ENCODE measurements at regions of chr7 and their contacts with region 1.

Region 1: DNA sequence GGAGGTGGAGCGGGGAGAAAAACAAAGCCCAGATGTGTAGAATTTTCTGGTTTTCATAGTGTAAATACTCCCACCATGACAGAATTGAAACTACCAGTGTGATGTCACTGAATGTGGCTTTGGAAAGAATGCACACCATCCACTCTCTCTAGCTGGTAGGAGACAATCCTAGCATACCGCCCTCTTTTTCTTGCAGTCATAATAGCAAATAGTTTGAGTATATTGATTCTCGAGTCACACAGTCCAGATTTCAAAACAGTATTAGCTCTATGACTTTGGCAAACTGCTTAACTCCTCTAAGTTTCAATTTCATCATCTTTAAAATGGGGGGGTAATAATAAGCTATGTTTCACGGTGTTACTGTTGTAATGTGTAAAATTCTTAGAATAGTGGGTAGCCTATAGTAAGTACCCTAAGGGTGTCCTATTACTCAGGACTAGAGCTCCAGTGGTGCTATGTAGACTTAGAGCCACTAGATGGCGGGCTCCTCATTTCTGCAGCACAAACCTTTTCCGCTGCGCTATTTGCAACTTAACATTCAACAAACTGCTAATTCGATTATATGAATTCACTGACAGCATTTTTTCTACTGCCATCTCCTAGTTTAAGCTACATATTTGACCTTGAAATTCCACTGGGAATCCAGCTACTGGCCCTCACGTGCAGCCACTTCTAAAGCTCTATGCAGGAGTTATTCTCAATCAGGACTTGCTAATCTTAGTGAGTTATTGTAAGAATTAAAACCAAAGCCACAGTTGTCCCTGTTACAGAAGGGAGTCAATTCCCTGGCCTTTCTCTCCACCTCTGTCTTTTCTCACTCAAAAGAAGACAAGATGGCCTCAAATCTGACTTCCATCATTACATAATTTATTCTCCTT is 18.7 kb downstream of the TAS2R40 start:
- DNase-seq: peak; percentile 82
- H3K4me3 Mint-ChIP-seq: no peak overlapping the region
- H3K27ac Mint-ChIP-seq: peak overlapping the region; percentile 1
- H3K4me1 Mint-ChIP-seq: peaks cover 53% of the 10 kb centered on the region
- H3K27me3 Mint-ChIP-seq: peaks cover 14% of the 10 kb centered on the region

Region 2: DNA sequence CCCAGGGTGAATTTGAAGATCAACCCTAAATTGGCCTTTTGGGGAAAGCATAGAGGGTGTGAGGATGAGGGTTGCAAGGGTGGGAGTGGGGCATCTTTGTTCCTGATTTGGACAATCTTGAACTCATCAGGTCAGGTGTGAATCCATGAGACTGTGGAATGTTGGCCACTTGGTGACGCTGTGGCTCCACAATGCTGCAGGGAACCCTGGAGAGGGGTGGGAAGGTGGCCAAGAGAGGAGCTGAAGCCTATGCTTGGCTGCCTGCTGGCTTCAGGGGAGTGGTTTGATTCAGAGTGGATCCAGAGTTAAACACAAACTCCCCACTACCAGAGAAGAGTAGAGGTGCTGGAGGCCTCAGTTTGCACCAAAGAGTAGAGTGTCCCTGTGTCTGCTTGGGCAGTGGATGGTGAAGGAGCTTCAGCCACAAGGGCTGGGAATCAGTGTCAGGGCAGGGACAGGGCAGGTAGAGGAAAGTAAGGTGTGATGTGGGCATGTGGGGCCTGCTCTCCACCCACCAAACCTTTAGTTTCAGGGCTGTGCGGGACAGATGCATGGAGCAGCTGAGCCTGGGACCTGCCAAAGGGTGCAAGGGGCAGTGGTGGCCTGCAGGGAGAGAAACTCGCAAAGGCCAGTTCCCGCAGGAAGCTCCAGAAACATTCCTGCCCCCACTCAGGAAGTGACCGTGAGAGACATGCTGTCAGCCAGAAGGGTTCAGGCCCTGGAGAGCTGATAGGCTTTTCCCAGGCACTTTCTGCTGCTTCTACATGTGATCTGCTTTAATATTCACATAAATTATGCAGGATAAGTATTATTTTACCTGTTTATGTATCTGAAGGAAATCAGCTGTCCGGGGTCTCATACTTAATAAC is 901.7 kb before region 1 on chr7:
- CTCF ChIA-PET with region 1: no interaction called
- DNase-seq: no peak
- H3K4me3 Mint-ChIP-seq: no peak overlapping the region
- H3K27ac Mint-ChIP-seq: peak overlapping the region; percentile 20
- H3K4me1 Mint-ChIP-seq: peaks cover 8% of the 10 kb centered on the region
- H3K27me3 Mint-ChIP-seq: peaks cover 22% of the 10 kb centered on the region

Region 3: GRCh38 chr7:143096146-143096545 is 144.4 kb before region 1 on chr7:
- CTCF ChIA-PET with region 1: no interaction called
- DNase-seq: no peak
- H3K4me3 Mint-ChIP-seq: no peak overlapping the region
- H3K27ac Mint-ChIP-seq: no peak overlapping the region
- H3K4me1 Mint-ChIP-seq: no peaks in the 10 kb centered on the region
- H3K27me3 Mint-ChIP-seq: no peaks in the 10 kb centered on the region

Region 4: DNA sequence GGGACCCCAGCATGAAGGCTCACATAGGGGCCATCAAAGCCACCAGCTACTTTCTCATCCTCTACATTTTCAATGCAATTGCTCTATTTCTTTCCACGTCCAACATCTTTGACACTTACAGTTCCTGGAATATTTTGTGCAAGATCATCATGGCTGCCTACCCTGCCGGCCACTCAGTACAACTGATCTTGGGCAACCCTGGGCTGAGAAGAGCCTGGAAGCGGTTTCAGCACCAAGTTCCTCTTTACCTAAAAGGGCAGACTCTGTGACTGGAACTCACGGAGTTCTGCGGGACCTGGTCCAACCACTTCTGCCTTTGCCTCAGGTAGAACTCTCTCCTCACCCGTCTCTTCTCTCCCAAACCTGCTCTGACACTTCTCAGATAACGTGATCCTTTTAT is 17.7 kb before region 1 on chr7:
- CTCF ChIA-PET with region 1: interaction called, 11 read pairs
- DNase-seq: no peak
- H3K4me3 Mint-ChIP-seq: no peak overlapping the region
- H3K27ac Mint-ChIP-seq: no peak overlapping the region
- H3K4me1 Mint-ChIP-seq: no peaks in the 10 kb centered on the region
- H3K27me3 Mint-ChIP-seq: peaks cover 48% of the 10 kb centered on the region

Region 5: GRCh38 chr7:143279186-143280098 is 38.9 kb after region 1 on chr7:
- CTCF ChIA-PET with region 1: interaction called, 13 read pairs
- DNase-seq: no peak
- H3K4me3 Mint-ChIP-seq: peak overlapping the region; percentile 66
- H3K27ac Mint-ChIP-seq: peak overlapping the region; percentile 86
- H3K4me1 Mint-ChIP-seq: peaks cover 45% of the 10 kb centered on the region
- H3K27me3 Mint-ChIP-seq: no peaks in the 10 kb centered on the region

Region 6: DNA sequence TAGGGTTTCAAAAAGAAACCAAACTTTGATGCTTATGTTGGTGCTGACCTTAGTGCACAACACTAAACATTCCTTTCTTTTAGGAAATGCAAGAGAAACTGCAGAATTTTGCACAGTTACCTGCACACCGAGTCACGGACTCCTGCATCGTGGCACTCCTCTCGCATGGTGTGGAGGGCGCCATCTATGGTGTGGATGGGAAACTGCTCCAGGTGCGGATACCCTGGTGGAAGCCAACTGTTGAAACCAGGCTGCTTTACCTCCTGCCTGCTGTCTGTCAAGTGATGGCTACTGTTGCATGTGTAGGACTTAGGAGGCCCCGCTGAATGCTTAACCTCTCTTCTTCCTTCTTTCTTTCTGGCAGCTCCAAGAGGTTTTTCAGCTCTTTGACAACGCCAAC is 59.3 kb after region 1 on chr7:
- CTCF ChIA-PET with region 1: interaction called, 185 read pairs
- DNase-seq: peak; percentile 77
- H3K4me3 Mint-ChIP-seq: no peak overlapping the region
- H3K27ac Mint-ChIP-seq: peak overlapping the region; percentile 31
- H3K4me1 Mint-ChIP-seq: peaks cover 73% of the 10 kb centered on the region
- H3K27me3 Mint-ChIP-seq: no peaks in the 10 kb centered on the region

Region 7: DNA sequence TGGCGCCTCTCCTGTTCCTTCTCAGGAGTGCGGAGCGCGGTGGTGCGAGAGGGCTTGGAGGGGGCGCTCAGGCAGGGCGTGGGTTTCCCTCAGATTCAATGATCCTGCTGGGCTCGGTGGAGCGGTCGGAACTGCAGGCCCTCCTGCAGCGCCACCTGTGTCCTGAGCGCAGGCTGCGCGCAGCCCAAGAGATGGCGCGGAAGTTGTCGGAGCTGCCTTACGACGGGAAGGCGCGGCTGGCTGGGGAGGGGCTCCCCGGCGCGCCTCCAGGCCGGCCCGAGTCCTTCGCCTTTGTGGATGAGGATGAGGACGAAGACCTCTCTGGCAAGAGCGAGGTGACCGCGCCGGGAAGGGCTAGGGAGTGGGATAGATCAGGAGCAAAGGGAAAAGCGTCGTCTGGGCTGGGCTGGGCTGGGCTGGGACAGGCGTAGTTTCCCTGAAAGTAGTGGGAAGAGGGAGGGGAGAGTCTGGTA is 104.9 kb after region 1 on chr7:
- CTCF ChIA-PET with region 1: interaction called, 17 read pairs
- DNase-seq: peak; percentile 78
- H3K4me3 Mint-ChIP-seq: peak overlapping the region; percentile 56
- H3K27ac Mint-ChIP-seq: no peak overlapping the region
- H3K4me1 Mint-ChIP-seq: peaks cover 9% of the 10 kb centered on the region
- H3K27me3 Mint-ChIP-seq: peaks cover 53% of the 10 kb centered on the region

Region 8: DNA sequence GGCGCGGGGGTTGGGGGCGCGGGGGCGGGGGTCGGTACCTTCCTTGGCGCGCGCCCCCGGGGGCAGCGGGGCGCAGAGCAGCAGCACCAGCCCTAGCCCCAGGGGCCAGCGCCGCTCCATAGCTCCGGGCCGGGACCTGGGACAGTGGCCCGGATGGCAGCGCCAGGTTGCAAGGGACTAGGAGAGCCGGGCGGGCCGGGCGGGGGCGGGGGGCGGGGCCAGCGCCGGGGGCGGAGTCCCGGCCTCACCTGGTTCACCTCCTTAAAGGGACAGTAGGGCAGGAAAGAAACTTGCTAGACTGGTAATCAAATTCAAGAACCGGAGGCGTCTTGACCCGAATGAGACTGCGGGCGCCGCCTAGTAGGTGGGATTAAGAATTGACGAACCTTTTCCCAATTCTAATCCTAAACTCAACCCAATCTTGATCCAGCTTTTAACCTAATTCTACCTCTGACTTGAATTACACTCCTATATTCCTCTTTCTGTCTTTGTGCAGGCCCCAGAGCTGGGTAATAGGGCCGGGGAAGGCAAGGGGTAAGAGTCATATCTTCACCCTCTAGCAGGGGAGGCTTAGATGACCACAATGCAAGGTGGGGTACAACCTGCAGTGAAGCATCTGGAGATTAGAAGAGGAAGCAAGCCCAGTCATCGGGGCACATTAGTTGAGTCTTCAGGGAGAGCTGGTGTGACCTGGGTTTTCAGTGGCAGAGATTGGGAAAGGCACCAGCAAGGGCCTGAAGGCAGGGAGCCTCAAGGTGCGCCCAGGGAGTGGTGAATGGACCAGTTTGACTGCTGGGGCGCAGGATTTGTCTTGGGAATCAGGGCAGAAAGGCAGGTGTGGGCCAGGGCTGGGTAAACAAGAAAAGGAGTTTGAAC is 168.4 kb after region 1 on chr7 and contains the start of gene EPHA1:
- CTCF ChIA-PET with region 1: interaction called, 10 read pairs
- DNase-seq: peak; percentile 65
- H3K4me3 Mint-ChIP-seq: peak within 1 kb of the TSS; percentile 78
- H3K27ac Mint-ChIP-seq: peak within 1 kb of the TSS; percentile 8
- H3K4me1 Mint-ChIP-seq: peaks cover 57% of the 10 kb centered on the region
- H3K27me3 Mint-ChIP-seq: peaks cover 9% of the 10 kb centered on the region